Activated T-helper 1 cell treated with anti-CD3 and anti-CD28 coated beads, Interleukin-12 subunit alpha, Interleukin-12 subunit beta, Interleukin-2, Interleukin-4 antibody, amounts not matched to agents 30 ng/mL and 10 ng/mL and 1 ng/mL, durations not matched to agents 14 hours and 24 hours and 36 hours (primary cell): ENCODE measurements at regions of chr11 and their contacts with region 1.

Region 1: DNA sequence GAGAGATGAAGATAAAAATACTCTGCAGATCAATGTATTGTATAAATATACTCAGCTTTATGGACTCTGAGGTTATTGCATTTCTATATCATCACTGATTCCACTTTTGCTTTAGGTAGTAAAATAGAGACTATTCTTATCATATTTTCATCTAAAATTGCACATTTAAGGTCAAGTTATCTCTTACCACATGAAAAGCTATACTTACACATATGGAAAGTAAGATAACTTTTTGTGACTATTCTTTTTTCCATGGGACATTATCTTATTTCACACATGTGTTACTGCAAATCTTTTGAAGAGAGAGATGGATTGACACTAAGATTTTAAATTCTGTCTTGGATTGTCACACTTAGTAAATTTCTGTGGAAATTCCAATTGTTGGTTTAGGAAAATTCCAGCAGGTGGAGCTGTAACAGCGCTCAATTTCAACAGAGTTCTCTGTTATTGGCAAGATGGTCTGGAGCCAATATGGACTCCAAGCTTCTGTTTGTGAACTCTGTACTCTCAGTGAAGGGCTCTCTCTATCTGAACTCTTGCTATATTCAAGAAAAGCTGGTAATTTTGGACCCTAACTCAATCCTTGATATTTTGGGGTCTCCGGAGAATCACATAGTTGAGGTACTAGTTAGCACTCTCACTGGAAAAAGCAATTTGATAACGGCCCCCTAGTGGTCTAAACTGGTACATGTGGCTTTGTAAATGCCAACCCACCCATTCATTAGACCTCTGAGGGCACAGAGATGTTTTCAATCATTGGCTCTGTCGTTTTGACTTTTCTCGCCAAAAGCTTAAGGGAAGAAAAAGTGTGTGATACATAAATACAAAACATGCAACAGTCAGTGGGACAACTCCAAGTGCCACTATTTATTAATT is 429.7 kb downstream of the ETS1 start:
- DNase-seq: peak; percentile 44
- H3K4me3 Mint-ChIP-seq: peak overlapping the region; percentile 16
- H3K27ac Mint-ChIP-seq: peak overlapping the region; percentile 66
- H3K4me1 Mint-ChIP-seq: peaks cover 13% of the 10 kb centered on the region
- H3K27me3 Mint-ChIP-seq: peaks cover 16% of the 10 kb centered on the region

Region 2: DNA sequence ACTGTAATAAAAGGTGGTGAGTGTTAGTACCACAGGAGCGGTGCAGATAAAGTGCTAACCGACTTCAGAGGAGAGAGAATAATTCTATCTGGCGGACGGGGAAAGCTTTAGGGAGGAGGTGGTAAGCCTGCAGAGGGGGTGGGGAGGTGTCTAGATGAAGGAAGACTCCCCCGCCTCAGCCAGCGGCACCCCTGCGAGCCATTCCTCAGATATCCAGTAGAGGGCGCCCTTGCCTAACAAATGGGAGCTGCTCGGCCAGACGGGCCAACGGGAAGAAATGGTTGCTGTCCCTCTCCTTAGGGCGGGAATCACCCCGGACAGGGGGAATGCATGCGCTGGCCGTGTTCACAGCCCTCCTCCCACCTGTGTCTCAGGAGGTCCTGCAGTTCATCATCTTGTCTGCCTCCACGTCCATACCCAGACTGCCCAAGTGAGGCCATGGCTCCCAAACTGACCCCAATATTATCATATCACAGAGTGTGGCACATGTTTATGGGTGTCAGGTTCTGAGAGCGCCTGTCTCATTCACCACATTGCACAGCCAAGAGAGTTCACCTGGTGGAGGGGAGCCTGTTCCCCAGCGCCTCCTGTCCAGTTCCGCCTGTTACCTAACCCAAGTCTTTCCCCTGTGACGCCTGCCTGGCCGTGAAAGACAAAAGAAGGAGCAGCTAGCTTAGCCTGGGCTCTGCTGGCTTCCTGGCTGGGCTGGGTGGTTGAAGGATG is 1716.7 kb before region 1 on chr11:
- intact Hi-C with region 1: loop called (anchors 5 kb)
- DNase-seq: peak; percentile 65
- H3K4me3 Mint-ChIP-seq: no peak overlapping the region
- H3K27ac Mint-ChIP-seq: no peak overlapping the region
- H3K4me1 Mint-ChIP-seq: no peaks in the 10 kb centered on the region
- H3K27me3 Mint-ChIP-seq: peaks cover 9% of the 10 kb centered on the region

Region 3: GRCh38 chr11:128757235-128757711 is 599.6 kb after region 1 on chr11:
- intact Hi-C with region 1: loop called (anchors 2 kb)
- DNase-seq: peak; percentile 55
- H3K4me3 Mint-ChIP-seq: peak overlapping the region; percentile 63
- H3K27ac Mint-ChIP-seq: peak overlapping the region; percentile 95
- H3K4me1 Mint-ChIP-seq: peaks cover 68% of the 10 kb centered on the region
- H3K27me3 Mint-ChIP-seq: no peaks in the 10 kb centered on the region

Region 4: GRCh38 chr11:128831174-128832120 is 673.8 kb after region 1 on chr11:
- intact Hi-C with region 1: loop called (anchors 1 kb)
- DNase-seq: peak; percentile 75
- H3K4me3 Mint-ChIP-seq: peak overlapping the region; percentile 68
- H3K27ac Mint-ChIP-seq: peak overlapping the region; percentile 90
- H3K4me1 Mint-ChIP-seq: peaks cover 31% of the 10 kb centered on the region
- H3K27me3 Mint-ChIP-seq: peaks cover 9% of the 10 kb centered on the region

Region 5: DNA sequence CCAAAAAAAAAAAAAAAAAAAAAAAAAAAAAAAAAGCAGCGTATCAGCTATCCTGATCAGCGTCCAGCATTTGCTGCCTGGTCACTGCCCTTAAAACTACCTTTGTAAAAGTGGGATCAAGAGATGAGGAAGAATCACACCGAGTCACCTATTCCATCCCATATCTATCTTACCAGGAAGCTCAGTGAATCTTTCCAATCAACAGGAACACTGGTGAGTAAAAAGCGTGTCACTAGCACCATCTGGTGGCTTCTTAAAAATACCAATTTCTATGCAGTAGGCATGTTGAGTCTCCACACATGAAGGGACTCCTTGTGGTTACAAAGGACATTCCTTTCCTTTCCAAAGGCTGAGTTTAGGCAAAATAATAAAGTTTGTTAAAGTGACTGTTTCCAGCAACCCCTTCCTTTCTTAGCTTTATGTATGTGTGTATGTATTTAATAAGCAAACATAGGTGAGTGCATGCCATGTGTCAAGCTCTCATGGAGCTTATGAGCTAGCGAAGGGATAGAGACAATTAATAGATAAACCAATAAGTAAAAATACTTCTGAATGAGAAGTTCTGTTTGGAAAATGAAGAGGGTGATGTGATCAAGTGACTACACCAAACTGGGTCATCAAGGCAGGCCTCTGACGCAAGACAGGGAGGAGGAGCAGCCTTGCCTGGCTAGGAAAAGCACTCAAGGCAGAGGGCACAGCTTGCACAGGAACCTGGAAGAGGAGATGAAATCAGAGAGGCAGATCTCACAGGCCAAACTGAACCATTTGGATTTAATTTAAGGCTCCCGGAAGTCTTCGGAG is 798.9 kb after region 1 on chr11:
- intact Hi-C with region 1: loop called (anchors 5 kb)
- DNase-seq: no peak
- H3K4me3 Mint-ChIP-seq: no peak overlapping the region
- H3K27ac Mint-ChIP-seq: no peak overlapping the region
- H3K4me1 Mint-ChIP-seq: peaks cover 12% of the 10 kb centered on the region
- H3K27me3 Mint-ChIP-seq: peaks cover 26% of the 10 kb centered on the region